ENCODE measurements at regions of chr2 and their contacts with region 1.

Region 1: GRCh38 chr2:85420536-85421259 is 2.2 kb downstream of the SH2D6 start:
- DNase-seq: peak; percentile 91
- CTCF ChIP-seq: peak; percentile 99

Region 2: GRCh38 chr2:85302121-85302520 is 118.6 kb before region 1 on chr2:
- in situ Hi-C with region 1: no loop called
- DNase-seq: no peak
- CTCF ChIP-seq: no peak

Region 3: DNA sequence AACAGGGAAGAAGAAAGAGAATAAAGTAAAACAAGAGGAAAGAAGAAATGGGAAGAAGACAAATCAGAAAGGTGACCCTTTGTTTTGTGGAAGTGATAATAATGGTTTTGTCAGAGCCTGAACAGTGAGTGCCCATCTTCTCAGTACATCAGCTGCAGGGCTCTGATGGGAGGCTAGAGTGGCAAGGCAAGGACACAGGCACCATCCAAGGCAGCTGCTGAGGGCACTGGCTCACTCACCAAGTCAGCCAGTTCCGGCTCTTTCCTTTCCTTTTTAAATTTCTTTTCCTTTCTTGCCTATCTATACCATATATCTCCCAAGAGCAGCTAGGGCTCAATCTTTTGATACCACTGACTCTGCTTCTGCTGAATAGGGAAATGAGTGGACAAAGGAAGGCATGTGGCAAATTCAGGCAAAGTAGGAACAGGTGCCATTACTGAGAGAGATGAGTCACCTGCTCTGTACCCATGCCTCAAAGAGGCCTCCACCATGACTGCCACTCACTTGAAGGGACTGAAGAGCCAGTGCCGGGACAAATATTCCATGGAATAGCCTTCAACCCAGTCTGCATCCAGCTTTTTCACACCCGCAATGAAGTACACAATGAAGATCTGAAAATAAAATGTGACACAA is 134.4 kb after region 1 on chr2:
- in situ Hi-C with region 1: loop called (anchors 5 kb)
- DNase-seq: no peak
- CTCF ChIP-seq: no peak

Region 4: DNA sequence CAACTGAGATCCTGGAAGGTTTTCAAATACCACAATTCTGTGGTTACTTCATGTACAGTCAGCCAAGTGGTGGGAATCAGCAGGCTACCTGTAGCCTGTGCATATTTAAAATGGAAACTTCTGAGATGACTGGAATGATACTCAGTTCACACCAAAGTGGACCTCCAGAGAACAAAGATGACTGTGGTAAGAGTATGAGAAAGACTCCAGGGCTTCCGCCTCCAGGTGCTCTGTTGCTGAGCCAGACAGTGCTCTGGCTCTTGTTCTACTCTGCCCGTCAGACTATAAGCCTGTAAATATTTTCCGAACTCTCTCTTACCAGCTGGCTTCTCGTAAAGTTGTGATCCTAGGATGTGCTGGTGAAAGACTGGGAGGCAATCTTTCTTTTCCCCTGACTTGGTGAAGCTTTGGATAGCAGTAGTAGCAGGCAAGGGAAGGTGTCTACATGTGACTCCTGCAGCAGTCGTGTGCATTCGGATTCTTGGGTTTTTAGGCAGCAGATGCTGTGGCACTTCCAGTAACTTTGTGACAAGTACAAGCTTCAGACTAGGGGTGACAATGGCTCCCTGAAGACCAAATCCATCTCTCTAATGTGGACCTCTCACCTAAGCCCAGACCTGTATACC is 445.0 kb after region 1 on chr2:
- in situ Hi-C with region 1: no loop called
- DNase-seq: peak; percentile 56
- CTCF ChIP-seq: no peak